Activated CD4-positive, alpha-beta memory T cell treated with anti-CD3 and anti-CD28 coated beads for 36 hours (primary cell): ENCODE measurements at regions of chr21 and their contacts with region 1.

Region 1: DNA sequence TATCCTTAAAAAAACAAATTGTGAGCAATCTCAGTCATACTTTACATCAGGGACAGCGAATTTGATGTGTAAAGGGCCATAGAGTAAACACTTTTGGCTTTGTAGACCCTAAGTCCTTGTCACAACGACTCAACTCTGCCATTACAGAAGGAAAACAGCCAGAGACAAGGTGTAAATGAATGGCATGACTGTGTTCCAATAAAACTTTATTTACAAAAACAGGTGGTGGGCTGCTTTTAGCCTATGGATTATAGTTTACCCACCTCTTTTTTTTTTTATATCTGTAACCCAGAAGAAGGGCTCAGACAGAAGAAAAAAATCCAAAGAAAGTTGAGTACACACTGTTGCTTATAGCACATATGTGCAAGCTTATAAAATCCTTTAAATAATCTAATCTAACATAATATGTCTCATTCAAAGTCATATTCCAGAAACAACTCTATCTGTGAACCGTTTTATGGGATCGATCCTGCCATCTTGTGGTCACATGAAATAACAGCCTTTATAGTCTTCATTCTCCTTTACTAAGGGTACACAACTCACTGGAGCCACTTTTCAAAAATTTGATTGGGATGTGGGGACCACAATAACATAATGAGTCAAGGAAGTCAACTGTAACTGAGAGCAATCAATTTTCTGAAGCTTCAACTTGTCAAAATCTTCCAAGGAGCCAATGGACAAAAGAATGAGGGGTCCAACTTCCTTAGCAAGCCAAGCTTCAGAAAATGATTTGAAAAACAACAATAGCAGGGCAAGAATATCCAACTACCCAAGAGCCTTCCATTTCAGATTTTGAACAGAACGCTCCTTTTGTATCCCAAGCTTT is 142.2 kb upstream of the KRTAP19-8 start:
- DNase-seq: no peak
- H3K4me3 Mint-ChIP-seq: peak overlapping the region; percentile 74
- H3K27ac Mint-ChIP-seq: peak overlapping the region; percentile 100
- H3K4me1 Mint-ChIP-seq: peaks cover 74% of the 10 kb centered on the region
- H3K27me3 Mint-ChIP-seq: no peaks in the 10 kb centered on the region

Region 2: GRCh38 chr21:31098576-31099005 is 81.9 kb before region 1 on chr21:
- CTCF ChIA-PET with region 1: interaction called, 29 read pairs
- POLR2A ChIA-PET with region 1: no interaction called
- intact Hi-C with region 1: loop called (anchors 1 kb)
- DNase-seq: peak; percentile 83
- H3K4me3 Mint-ChIP-seq: peak overlapping the region; percentile 20
- H3K27ac Mint-ChIP-seq: no peak overlapping the region
- H3K4me1 Mint-ChIP-seq: peaks cover 26% of the 10 kb centered on the region
- H3K27me3 Mint-ChIP-seq: peaks cover 3% of the 10 kb centered on the region

Region 3: GRCh38 chr21:31132574-31133242 is 47.8 kb before region 1 on chr21:
- CTCF ChIA-PET with region 1: interaction called, 11 read pairs
- POLR2A ChIA-PET with region 1: interaction called, 5 read pairs
- intact Hi-C with region 1: loop called (anchors 1 kb)
- DNase-seq: peak; percentile 82
- H3K4me3 Mint-ChIP-seq: peak overlapping the region; percentile 64
- H3K27ac Mint-ChIP-seq: peak overlapping the region; percentile 95
- H3K4me1 Mint-ChIP-seq: peaks cover 65% of the 10 kb centered on the region
- H3K27me3 Mint-ChIP-seq: no peaks in the 10 kb centered on the region

Region 4: GRCh38 chr21:31204801-31205200 is 24.3 kb after region 1 on chr21:
- CTCF ChIA-PET with region 1: no interaction called
- POLR2A ChIA-PET with region 1: no interaction called
- intact Hi-C with region 1: no loop called
- DNase-seq: no peak
- H3K4me3 Mint-ChIP-seq: no peak overlapping the region
- H3K27ac Mint-ChIP-seq: no peak overlapping the region
- H3K4me1 Mint-ChIP-seq: peaks cover 9% of the 10 kb centered on the region
- H3K27me3 Mint-ChIP-seq: no peaks in the 10 kb centered on the region

Region 5: DNA sequence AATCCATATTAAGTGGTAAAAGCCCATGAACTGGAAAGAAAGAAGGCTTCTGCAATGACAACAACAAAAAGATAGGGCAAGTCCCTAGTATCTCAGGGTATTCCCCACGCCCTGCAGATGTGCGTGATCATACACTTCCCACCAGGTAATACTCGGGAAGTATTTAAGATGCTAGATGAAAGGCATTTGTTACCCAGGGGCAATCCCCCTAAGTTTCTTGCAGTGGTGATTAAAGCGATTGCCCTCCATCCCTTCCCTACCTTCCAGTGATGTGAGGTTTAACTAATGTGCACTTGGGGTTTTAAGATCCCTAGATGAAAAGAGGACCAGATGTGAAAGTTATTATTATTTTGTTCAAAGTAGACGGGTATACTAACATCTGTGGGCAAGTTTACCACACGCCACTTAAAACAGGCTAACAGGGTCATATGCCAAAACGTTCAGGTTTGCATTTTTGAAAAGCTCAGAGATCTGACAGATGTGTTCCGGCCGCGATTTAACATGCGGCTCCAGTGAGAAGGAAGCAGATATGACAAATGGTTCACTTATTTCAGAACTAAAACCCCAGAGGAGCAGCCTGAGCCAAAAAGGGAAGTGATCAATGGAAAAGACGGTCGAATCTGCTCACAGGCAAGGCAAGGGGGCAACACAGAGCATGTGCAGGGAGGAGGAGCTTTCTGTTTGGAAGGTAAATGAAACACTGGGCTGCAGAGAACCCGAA is 146.2 kb after region 1 on chr21:
- CTCF ChIA-PET with region 1: no interaction called
- POLR2A ChIA-PET with region 1: no interaction called
- intact Hi-C with region 1: loop called (anchors 2 kb)
- DNase-seq: peak; percentile 81
- H3K4me3 Mint-ChIP-seq: peak overlapping the region; percentile 47
- H3K27ac Mint-ChIP-seq: peak overlapping the region; percentile 88
- H3K4me1 Mint-ChIP-seq: peaks cover 30% of the 10 kb centered on the region
- H3K27me3 Mint-ChIP-seq: no peaks in the 10 kb centered on the region

Region 6: GRCh38 chr21:31580866-31581276 is 400.4 kb after region 1 on chr21:
- CTCF ChIA-PET with region 1: interaction called, 16 read pairs
- POLR2A ChIA-PET with region 1: no interaction called
- intact Hi-C with region 1: no loop called
- DNase-seq: peak; percentile 84
- H3K4me3 Mint-ChIP-seq: no peak overlapping the region
- H3K27ac Mint-ChIP-seq: no peak overlapping the region
- H3K4me1 Mint-ChIP-seq: peaks cover 4% of the 10 kb centered on the region
- H3K27me3 Mint-ChIP-seq: peaks cover 3% of the 10 kb centered on the region

Region 7: DNA sequence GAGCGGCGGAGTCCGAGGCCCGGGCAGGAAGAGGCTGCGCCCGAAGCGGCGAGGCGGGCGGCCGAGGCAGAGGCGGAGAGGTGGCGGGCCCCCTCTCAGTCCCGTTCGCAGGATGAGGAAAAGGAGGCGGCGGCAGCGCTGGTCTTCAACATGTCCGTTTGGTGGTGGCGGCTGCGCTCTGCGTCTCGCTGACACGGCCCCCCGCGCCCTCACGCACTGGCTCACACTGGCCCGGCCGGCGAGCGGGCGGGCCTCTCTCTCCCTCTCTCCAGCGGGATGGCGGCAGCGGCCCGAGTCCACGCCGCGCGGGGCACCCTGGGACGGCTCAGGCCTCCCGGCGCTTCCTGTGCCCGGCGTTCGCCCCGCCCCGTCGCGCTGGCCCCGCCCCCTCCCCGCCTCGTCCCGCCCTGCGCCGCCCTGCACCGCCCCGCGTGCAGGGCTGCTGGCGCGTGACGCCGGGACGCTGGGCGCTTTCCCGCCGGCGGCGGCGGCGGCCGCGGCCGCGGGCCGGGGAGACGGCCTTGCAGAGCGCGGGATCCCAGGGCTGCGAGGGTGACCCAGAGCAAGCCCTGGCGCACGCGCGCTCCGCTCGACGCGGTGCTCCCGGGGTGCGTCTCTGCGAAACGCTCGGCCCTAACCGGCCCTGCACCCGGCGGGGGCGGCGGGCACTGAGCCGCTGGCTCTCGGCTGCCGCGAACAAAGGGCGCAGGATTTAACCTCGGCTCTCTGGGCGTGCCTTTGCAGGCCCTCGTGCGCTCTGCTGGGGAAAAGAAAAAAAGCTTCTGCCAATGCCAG is 551.5 kb after region 1 on chr21 and contains the start of gene SCAF4:
- CTCF ChIA-PET with region 1: no interaction called
- POLR2A ChIA-PET with region 1: no interaction called
- intact Hi-C with region 1: loop called (anchors 5 kb)
- DNase-seq: peak; percentile 90
- H3K4me3 Mint-ChIP-seq: peak within 1 kb of the TSS; percentile 86
- H3K27ac Mint-ChIP-seq: peak within 1 kb of the TSS; percentile 76
- H3K4me1 Mint-ChIP-seq: peaks cover 6% of the 10 kb centered on the region
- H3K27me3 Mint-ChIP-seq: no peaks in the 10 kb centered on the region
- total RNA-seq, gene SCAF4: 38.0 to 39.4 TPM